Adrenal gland (tissue), 19 donors: ENCODE measurements at regions of chr1 and their contacts with region 1.

Region 1: GRCh38 chr1:20521960-20522861 is 14.3 kb upstream of the MUL1 start:
- DNase-seq: peak; percentile 81 to 94 (median 87)
- H3K4me3 ChIP-seq: peak overlapping the region in 1 of 4 donors; percentile 46
- H3K27ac ChIP-seq: no peak overlapping the region
- H3K4me1 ChIP-seq: peaks cover 0 to 5% of the 10 kb centered on the region in 2 donors
- H3K27me3 ChIP-seq: no peaks in the 10 kb centered on the region
- CTCF ChIP-seq: peak; percentile 92 to 99 (median 96)
- POLR2A ChIP-seq: no peak

Region 2: DNA sequence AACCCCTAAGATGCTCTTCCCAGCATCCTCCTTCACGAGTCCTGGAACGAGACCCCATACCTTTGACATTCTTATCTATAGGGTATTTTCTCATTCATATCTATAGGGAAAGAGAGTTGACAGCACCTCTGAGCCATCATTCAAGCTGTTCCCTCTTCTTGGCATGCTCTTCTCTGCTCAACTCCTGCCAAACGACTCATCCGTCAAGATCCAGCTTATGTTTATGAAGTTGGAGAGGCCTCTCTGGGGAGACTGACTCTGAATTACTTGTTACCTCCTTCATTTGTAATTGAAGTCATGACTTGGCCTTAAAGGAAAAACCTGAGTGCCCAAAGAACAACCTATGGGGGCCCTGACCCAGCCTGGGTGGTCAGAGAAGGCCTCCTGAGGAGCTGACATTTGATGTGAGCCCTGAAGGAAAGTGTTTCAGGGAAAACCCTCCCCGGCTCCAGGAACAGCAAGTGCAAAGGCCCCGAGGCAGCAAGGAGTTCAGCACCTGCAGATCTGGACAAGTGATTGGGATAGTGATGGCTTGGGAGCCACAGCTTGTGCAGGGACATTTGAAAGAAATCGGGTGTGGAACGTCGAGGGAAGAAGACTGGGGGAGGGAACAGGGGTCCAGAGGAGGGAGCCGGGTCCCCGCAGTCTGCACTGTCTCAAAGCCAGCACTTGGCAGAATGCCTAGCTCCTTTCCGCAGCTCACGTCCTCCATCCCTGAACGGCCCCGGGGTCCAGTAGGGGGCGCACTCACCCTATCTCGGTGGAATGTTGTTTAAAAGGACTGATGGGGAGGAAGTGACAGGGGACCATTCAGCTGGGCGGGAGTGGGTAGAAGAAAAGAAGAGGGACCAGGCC is 52.7 kb after region 1 on chr1:
- intact Hi-C with region 1: loop called in 1 of 2 experiments (anchors 5 kb)
- DNase-seq: peak; percentile 85 to 95 (median 93)
- H3K4me3 ChIP-seq: no peak overlapping the region
- H3K27ac ChIP-seq: no peak overlapping the region
- H3K4me1 ChIP-seq: no peaks in the 10 kb centered on the region
- H3K27me3 ChIP-seq: no peaks in the 10 kb centered on the region
- CTCF ChIP-seq: peak; percentile 73 to 87 (median 83)
- POLR2A ChIP-seq: no peak

Region 3: DNA sequence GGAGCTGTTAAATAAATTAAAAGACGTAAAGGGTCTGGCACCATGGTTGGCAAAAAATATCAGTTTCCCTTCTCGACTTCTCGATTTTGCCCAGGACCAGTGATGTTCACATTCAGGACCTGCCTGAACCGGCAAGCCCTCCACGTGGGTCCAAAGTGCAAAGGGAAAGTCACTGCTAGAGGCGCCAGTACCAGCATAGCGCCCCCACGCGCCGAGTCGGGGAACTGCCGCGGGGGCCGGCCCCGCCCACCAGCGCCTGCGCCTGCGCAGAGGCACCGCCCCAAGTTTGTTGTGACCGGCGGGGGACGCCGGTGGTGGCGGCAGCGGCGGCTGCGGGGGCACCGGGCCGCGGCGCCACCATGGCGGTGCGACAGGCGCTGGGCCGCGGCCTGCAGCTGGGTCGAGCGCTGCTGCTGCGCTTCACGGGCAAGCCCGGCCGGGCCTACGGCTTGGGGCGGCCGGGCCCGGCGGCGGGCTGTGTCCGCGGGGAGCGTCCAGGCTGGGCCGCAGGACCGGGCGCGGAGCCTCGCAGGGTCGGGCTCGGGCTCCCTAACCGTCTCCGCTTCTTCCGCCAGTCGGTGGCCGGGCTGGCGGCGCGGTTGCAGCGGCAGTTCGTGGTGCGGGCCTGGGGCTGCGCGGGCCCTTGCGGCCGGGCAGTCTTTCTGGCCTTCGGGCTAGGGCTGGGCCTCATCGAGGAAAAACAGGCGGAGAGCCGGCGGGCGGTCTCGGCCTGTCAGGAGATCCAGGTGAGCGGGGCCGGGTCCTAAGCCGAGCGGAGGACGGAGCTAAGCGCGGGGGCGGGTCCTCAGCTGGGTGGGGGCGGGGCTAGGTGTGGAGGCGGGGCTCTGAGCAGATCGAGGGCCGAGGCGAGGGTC is 111.2 kb after region 1 on chr1 and contains the start of gene PINK1:
- intact Hi-C with region 1: loop called in 1 of 2 experiments (anchors 5 kb)
- DNase-seq: peak; percentile 82 to 94 (median 85)
- H3K4me3 ChIP-seq: peak within 1 kb of the TSS; percentile 3 to 98 (median 71)
- H3K27ac ChIP-seq: peak within 1 kb of the TSS; percentile 87 to 99 (median 93)
- H3K4me1 ChIP-seq: peaks cover 22 to 29% of the 10 kb centered on the region in 2 donors
- H3K27me3 ChIP-seq: no peaks in the 10 kb centered on the region
- CTCF ChIP-seq: peak; percentile 89 to 100 (median 96)
- POLR2A ChIP-seq: peak; percentile 91 to 96
- total RNA-seq, gene PINK1: 98.4 to 586 (median 305) TPM

Region 4: GRCh38 chr1:20640183-20640597 is 118.0 kb after region 1 on chr1:
- intact Hi-C with region 1: loop called (anchors 2 to 5 kb)
- DNase-seq: peak in 4 of 7 donors; percentile 51 to 74 (median 66)
- H3K4me3 ChIP-seq: no peak overlapping the region
- H3K27ac ChIP-seq: no peak overlapping the region
- H3K4me1 ChIP-seq: peaks cover 11 to 20% of the 10 kb centered on the region in 2 donors
- H3K27me3 ChIP-seq: no peaks in the 10 kb centered on the region
- CTCF ChIP-seq: peak; percentile 74 to 93 (median 82)
- POLR2A ChIP-seq: no peak

Region 5: DNA sequence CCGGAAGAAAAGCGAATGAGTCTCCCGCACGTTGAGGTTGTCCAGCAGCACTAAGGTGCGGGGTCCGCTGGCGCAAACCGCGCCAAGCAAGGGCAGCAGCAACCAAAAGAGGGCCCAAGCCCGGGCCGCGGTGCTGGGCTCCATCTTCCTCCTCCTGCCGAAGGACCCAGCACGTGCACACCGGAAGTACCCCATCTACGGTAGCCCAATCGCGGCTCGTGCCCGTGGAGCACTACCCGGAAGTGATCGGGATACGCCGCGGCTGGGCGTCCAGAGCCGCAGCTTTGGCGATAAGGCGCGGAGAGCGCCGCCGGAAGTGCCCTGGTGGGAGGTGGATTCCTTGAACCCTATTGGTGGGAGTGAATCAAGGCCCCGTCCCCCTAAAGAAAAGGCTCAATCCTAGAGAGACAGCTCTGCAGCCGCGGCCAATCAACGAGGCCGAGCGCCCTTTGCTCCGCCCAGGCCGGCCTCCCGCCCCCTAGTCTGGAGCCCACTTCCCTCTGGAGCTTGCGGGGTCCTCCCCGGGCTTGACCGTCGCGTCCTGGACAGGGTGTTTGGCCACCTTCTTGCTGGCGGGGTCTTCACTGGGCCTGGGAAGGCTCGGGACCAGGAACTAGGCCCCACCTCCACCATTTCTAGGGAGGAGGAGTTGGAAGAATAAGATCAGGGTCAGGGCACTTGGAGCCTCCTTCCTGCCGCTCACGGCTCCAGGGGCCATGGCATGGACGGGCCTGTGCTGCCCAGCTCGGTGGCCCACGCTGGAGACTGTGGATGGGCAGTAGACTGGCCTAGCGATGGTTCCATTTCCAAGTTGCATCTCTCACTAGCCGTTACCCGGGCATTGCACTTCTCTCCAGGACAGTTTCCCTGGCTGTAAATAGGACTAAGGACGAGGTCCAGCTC is 139.2 kb after region 1 on chr1 and contains the start of gene DDOST:
- intact Hi-C with region 1: no loop called
- DNase-seq: peak; percentile 92 to 98 (median 97)
- H3K4me3 ChIP-seq: peak within 1 kb of the TSS; percentile 48 to 99 (median 79)
- H3K27ac ChIP-seq: peak within 1 kb of the TSS in 4 of 5 donors; percentile 63 to 87 (median 78)
- H3K4me1 ChIP-seq: peaks cover 5 to 42% of the 10 kb centered on the region in 2 donors
- H3K27me3 ChIP-seq: no peaks in the 10 kb centered on the region
- CTCF ChIP-seq: peak in 4 of 6 experiments; percentile 24 to 39 (median 30)
- POLR2A ChIP-seq: peak; percentile 24 to 39
- total RNA-seq, gene DDOST: 134 to 349 (median 205) TPM